Left colon (tissue), 2 donors: ENCODE measurements at regions of chr7 and their contacts with region 1.

Region 1: DNA sequence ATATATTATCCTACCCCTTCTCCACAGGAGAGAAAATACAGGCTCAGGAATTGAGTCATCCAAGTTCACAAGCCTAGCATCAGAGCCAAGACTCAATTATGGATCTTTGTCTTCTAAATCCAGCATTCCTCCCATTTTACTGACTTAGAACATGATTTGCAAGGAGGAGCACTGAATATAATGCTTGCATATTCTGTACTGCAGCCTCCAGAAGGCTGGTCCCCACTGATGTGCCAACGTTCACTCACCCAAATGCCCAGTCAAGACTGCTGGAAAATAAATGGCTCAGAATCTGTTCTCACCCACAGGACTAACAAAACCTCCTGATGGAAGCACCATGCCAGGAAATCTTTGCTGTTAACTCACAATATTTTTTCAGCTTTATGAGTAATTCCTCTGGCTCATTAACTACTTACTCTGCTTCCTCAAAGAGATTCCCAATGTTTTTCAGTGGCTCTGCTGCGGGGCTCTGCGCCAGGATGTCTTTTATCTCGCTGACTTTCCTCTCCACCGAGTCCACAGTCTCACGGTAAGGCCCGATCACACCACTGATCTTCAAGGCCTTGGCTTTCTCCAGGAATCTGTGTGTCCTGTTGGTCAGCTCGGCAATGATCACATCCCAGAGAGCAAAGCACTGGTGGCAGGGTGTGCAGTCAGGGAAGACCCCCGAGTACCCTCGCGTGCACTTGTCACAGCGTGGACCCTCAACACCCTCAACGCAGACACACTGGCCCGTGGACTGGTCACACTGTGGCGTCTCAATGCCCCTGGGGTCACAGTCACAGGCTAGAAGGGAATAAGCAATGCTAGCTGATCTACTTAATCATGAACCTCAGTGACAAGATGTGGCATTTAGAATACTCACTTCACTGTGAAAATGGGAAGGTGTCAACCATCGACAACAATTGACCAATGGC is 48.8 kb downstream of the DLD start:
- DNase-seq: peak in 1 of 2 donors; percentile 22
- ATAC-seq: no peak

Region 2: GRCh38 chr7:108002726-108003598 is 63.1 kb after region 1 on chr7 and contains the start of gene LAMB1:
- intact Hi-C with region 1: loop called in 1 of 2 experiments (anchors 5 kb)
- DNase-seq: peak; percentile 85
- ATAC-seq: peak; percentile 67
- total RNA-seq, gene LAMB1: 95.9 to 132 TPM

Region 3: GRCh38 chr7:108062250-108063014 is 122.6 kb after region 1 on chr7:
- intact Hi-C with region 1: no loop called
- DNase-seq: no peak
- ATAC-seq: no peak